ENCODE measurements at regions of chr1 and their contacts with region 1.

Region 1: DNA sequence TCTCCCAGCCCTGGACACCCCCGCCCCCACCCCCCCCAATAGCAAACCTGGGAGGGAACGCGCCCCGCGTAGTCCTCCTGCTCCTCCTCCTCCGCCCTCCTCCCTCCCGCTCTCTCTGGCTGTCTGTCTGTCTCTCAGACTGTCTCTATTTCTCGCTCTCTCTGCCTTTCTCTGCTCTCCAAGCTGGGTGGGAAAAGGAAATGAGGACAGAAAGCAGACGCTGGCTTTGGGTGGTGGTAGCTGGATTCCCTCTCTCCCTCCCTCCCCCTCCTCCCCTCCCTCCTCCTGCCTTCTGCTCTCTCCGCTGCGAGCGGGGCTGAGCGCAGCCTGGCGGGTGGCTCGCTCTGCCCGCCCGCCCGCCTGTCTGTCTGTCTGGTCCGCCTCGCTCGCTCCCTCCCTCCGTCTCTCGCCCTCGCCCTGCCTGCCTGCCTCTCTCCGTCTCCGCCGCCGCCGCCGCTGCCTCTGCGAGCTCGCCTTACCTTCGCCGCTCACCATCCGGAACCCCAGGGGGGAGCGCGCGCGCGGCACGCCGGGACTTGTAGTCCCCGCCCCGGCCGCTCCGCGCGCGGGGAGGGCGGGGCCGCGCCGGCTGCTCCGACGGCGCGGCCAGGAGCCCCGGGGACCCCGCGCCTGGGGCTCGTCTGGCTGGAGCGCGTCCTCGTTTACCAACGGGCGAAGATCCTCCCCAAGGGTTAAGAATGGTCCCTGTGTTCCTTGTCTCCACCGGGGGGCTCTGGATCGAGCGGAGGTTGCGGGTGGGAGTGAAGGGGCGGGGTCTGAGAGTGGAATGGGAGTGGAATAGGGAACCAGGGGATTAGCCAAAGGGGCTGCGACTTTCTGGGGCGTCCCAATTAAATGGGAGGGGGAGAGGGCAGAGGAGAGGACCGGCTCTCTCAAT is at the start of gene AHDC1:
- DNase-seq: peak; percentile 87
- H3K4me3 Mint-ChIP-seq: peak within 1 kb of the TSS; percentile 94
- H3K27ac Mint-ChIP-seq: peak within 1 kb of the TSS; percentile 76
- H3K4me1 Mint-ChIP-seq: peaks cover 41% of the 10 kb centered on the region
- H3K27me3 Mint-ChIP-seq: peaks cover 2% of the 10 kb centered on the region
- total RNA-seq, gene AHDC1: 28.5 and 29.3 TPM in 2 replicates

Region 2: DNA sequence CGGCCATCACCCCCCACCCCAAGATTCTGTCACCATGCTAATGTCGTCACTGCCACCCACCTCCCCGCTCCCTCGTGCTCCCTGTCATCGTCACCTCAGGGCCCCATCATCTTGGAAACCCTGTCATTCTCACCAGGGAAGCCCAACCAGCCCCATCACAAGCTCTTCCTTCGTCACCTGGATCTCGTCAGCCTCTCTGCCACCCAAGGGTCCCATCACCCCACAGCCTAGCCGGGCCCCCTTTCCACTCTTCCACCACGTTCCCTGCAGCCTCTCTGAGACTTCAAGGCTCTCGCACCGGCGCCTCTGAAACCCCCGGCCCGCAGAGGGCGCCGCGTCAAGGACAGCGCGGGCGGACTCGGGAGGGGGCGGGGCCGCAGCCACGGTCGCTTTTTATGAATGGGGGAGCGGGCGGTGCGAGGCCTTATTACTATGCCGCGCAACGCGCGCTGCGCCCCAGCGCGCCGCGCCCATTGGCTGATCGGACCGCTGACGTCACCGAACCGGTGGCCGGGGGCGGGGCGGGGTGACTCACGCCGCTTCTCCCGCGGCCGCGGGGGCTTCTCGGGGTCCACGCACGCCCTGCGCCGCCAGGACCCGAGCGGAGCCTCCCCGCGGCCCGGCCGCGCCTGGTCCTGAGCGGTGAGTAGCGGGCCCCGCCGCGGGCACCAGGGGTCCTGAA is 211.7 kb before region 1 on chr1 and contains the start of gene GPR3:
- intact Hi-C with region 1: loop called (anchors 1 kb)
- DNase-seq: peak; percentile 90
- H3K4me3 Mint-ChIP-seq: peak within 1 kb of the TSS; percentile 82
- H3K27ac Mint-ChIP-seq: peak within 1 kb of the TSS; percentile 89
- H3K4me1 Mint-ChIP-seq: peaks cover 14% of the 10 kb centered on the region
- H3K27me3 Mint-ChIP-seq: peaks cover 6% of the 10 kb centered on the region
- total RNA-seq, gene GPR3: 3.7 and 3.9 TPM in 2 replicates

Region 3: GRCh38 chr1:27522432-27523351 is 81.2 kb before region 1 on chr1:
- intact Hi-C with region 1: loop called (anchors 2 kb)
- DNase-seq: peak; percentile 68
- H3K4me3 Mint-ChIP-seq: peak overlapping the region; percentile 92
- H3K27ac Mint-ChIP-seq: peak overlapping the region; percentile 96
- H3K4me1 Mint-ChIP-seq: peaks cover 59% of the 10 kb centered on the region
- H3K27me3 Mint-ChIP-seq: no peaks in the 10 kb centered on the region

Region 4: DNA sequence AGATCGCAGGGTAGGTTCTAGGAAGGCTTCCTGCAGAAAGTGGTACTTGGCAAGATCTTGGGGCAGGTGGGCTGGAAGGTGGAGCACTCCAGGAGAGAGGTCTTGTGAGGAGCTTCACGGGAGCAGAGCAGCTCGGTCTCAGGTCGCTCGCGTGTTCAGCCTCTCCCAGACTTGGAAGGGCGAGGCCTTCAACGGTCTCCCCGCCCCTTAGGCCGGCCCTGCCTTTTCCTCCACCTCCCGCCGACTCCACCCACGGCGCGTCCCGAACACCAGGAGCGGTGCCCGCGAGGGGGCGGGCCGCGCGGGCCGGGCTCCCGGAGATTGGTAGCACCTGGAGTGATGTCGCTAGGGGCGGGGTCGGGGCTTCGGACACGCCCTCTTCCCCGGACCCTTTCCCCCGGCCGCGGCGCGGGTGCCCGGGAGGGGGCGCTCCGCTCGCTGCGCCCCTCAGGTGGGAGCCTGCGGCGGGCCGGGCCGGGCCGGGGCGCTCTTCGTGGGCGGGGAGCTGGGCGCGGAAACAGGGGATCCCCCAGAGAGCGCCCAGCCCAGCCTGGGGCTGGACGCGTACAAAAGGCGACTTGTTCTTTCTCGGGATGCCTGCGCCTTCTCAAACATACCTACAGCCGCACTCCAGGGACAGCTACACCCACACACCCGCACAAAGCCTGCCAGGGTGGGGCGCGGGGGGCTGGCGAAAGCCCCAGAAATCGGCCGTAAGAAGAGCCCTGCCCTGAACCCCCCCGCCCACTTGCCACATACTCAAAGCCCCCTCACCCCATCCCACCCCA is 35.4 kb before region 1 on chr1:
- intact Hi-C with region 1: loop called (anchors 2 kb)
- DNase-seq: peak; percentile 95
- H3K4me3 Mint-ChIP-seq: peak overlapping the region; percentile 73
- H3K27ac Mint-ChIP-seq: peak overlapping the region; percentile 1
- H3K4me1 Mint-ChIP-seq: peaks cover 17% of the 10 kb centered on the region
- H3K27me3 Mint-ChIP-seq: no peaks in the 10 kb centered on the region